ENCODE measurements at regions of chr3 and their contacts with region 1.

Region 1: GRCh38 chr3:143674100-143674968 is 173.9 kb downstream of the SLC9A9 start:
- DNase-seq: peak; percentile 84
- ATAC-seq: peak; percentile 98
- H3K4me3 Mint-ChIP-seq: peak overlapping the region; percentile 65
- H3K27ac Mint-ChIP-seq: peak overlapping the region; percentile 81
- H3K4me1 Mint-ChIP-seq: peaks cover 17% of the 10 kb centered on the region
- H3K27me3 Mint-ChIP-seq: no peaks in the 10 kb centered on the region
- CTCF ChIP-seq: peak; percentile 90

Region 2: DNA sequence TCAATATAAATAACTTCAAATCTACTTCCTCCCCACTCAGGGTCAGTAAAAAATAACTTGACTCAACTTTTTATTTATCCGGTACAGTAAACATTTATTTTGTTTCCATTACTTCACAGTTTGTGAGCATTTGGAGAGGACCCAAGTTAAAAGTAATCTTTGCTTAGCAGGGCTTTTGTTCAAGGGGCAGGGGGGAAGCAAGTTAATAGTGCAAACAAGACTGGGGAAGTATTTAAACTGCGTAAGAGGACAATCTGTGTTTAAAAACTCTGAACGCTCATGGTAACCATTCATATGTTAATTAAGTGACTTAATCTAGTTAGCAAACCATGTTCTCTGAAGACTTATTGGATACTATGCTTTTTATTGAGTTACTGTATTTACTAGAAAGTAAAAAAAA is 172.3 kb before region 1 on chr3:
- CTCF ChIA-PET with region 1: no interaction called
- POLR2A ChIA-PET with region 1: no interaction called
- intact Hi-C with region 1: no loop called
- DNase-seq: no peak
- ATAC-seq: no peak
- H3K4me3 Mint-ChIP-seq: no peak overlapping the region
- H3K27ac Mint-ChIP-seq: no peak overlapping the region
- H3K4me1 Mint-ChIP-seq: no peaks in the 10 kb centered on the region
- H3K27me3 Mint-ChIP-seq: no peaks in the 10 kb centered on the region
- CTCF ChIP-seq: no peak

Region 3: DNA sequence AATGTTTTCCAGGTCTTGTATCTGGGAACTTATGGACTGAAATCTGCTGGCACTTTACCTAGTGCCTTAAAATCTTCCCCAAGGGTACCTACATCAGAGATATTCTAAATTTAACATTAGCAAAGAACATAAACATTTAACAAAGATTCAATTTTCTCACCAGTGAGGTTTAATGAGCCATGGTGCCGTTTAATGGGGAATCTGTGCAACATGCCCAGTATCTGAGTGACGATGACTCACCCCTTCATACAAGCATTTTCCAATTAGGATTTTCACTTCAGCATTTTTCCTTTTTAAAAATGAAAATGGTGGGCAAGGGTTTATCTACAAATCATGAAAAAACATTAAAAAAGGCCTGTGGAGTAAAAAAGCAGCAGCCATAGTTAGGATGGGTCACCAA is 15.5 kb before region 1 on chr3:
- CTCF ChIA-PET with region 1: interaction called, 16 read pairs
- POLR2A ChIA-PET with region 1: no interaction called
- intact Hi-C with region 1: no loop called
- DNase-seq: no peak
- ATAC-seq: no peak
- H3K4me3 Mint-ChIP-seq: no peak overlapping the region
- H3K27ac Mint-ChIP-seq: no peak overlapping the region
- H3K4me1 Mint-ChIP-seq: no peaks in the 10 kb centered on the region
- H3K27me3 Mint-ChIP-seq: no peaks in the 10 kb centered on the region
- CTCF ChIP-seq: no peak

Region 4: DNA sequence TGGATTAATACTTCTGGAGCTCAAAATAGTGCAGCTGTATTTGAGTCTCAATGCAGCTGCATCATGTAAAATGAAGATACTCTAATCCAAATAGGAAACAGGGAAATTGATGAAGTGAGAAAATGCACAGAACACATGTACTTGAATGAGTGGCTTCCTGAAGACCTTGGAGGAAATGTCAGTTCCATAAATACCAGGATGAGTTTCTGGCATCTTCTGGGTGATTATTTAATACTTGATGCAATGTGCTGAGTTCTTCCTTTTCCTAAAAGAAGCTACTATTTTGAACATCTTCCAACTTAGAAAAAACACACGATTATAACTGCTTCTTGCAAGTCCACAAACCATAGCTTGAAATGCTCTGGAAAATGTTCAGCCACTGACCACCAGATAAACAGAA is 11.2 kb after region 1 on chr3:
- CTCF ChIA-PET with region 1: interaction called, 23 read pairs
- POLR2A ChIA-PET with region 1: no interaction called
- intact Hi-C with region 1: no loop called
- DNase-seq: no peak
- ATAC-seq: no peak
- H3K4me3 Mint-ChIP-seq: no peak overlapping the region
- H3K27ac Mint-ChIP-seq: no peak overlapping the region
- H3K4me1 Mint-ChIP-seq: no peaks in the 10 kb centered on the region
- H3K27me3 Mint-ChIP-seq: no peaks in the 10 kb centered on the region
- CTCF ChIP-seq: no peak

Measured in activated CD8-positive, alpha-beta T cell treated with anti-CD3 and anti-CD28 coated beads for 36 hours (primary cell).